Heart right ventricle (tissue), 16 donors: ENCODE measurements at regions of chr6 and their contacts with region 1.

Region 1: DNA sequence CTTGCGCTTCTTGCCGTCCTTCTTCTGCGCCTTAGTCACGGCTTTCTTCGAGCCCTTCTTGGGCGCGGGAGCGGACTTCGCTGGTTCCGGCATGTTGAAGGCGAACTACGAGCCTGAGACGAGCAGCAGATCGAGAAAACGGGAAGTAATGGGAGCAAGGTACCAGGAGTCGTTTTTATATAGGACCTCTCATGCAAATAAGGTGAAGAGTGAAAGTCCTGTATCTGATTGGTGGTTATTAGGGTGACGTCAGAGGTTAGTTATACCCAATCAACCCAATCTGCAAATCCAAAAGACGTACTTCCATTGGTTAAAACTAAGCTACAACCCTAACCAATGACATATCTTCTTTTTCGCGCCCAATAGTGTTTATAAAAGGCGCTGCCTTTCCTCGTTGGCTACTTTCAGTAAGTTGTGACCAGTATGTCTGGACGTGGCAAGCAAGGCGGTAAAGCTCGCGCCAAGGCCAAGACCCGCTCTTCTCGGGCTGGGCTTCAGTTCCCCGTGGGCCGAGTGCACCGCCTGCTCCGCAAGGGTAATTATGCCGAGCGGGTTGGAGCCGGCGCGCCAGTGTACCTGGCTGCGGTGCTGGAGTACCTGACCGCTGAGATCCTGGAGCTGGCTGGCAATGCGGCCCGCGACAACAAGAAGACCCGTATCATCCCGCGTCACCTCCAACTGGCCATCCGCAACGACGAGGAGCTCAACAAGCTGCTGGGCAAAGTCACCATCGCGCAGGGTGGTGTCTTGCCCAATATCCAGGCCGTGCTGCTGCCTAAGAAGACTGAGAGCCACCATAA is 100.6 kb upstream of the PRSS16 start:
- DNase-seq: peak; percentile 62 to 86
- ATAC-seq: peak; percentile 92 to 98 (median 96)
- H3K4me3 ChIP-seq: peak overlapping the region; percentile 45 to 79 (median 66)
- H3K27ac ChIP-seq: peak overlapping the region; percentile 81 to 93 (median 89)
- H3K4me1 ChIP-seq: peaks cover 0 to 33% (median 15%) of the 10 kb centered on the region in 9 donors
- H3K27me3 ChIP-seq: no peaks in the 10 kb centered on the region
- CTCF ChIP-seq: no peak

Region 2: DNA sequence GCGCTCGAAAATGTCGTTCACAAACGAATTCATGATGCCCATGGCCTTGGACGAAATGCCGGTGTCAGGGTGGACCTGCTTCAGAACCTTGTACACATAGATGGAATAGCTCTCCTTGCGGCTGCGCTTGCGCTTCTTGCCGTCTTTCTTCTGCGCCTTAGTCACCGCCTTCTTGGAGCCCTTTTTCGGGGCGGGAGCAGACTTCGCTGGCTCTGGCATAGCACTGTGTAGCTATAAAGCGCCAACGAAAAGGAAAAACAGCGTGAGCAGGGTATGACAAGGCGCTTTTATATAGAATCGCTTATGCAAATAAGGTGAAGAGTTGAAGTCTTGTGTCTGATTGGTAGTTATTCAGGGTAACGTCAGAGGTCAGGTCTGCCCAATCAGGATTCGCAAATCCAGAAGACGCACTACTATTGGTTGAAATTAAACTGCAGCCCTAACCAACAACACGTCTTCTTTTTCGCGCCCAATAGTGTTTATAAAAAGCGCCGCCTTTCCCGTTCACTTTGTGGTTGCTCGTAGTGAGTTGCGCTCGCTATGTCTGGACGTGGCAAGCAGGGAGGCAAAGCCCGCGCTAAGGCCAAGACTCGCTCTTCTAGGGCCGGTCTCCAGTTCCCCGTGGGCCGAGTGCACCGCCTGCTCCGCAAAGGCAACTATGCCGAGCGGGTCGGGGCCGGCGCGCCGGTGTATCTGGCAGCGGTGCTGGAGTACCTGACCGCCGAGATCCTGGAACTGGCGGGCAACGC is 14.2 kb before region 1 on chr6:
- intact Hi-C with region 1: loop called in 3 of 10 experiments (anchors 2 kb)
- DNase-seq: peak; percentile 72 to 91
- ATAC-seq: peak; percentile 95 to 97 (median 96)
- H3K4me3 ChIP-seq: peak overlapping the region; percentile 31 to 67 (median 64)
- H3K27ac ChIP-seq: peak overlapping the region; percentile 11 to 90 (median 79)
- H3K4me1 ChIP-seq: peaks cover 0 to 42% (median 14%) of the 10 kb centered on the region in 9 donors
- H3K27me3 ChIP-seq: no peaks in the 10 kb centered on the region
- CTCF ChIP-seq: peak in 1 of 9 donors; percentile 6

Region 3: GRCh38 chr6:27352850-27353249 is 205.9 kb after region 1 on chr6:
- intact Hi-C with region 1: no loop called
- DNase-seq: no peak
- ATAC-seq: no peak
- H3K4me3 ChIP-seq: no peak overlapping the region
- H3K27ac ChIP-seq: no peak overlapping the region
- H3K4me1 ChIP-seq: no peaks in the 10 kb centered on the region
- H3K27me3 ChIP-seq: no peaks in the 10 kb centered on the region
- CTCF ChIP-seq: no peak